PC-9 (cell line): ENCODE measurements at regions of chr9 and their contacts with region 1.

Region 1: GRCh38 chr9:88605512-88606362 is 70.8 kb downstream of the NXNL2 start:
- DNase-seq: no peak
- H3K4me3 ChIP-seq: no peak overlapping the region
- H3K27ac ChIP-seq: no peak overlapping the region
- H3K4me1 ChIP-seq: no peaks in the 10 kb centered on the region
- H3K27me3 ChIP-seq: no peaks in the 10 kb centered on the region
- CTCF ChIP-seq: no peak

Region 2: GRCh38 chr9:88672874-88673689 is 67.3 kb after region 1 on chr9:
- CTCF ChIA-PET with region 1: interaction called, 15 read pairs
- POLR2A ChIA-PET with region 1: no interaction called
- intact Hi-C with region 1: no loop called
- DNase-seq: no peak
- H3K4me3 ChIP-seq: no peak overlapping the region
- H3K27ac ChIP-seq: no peak overlapping the region
- H3K4me1 ChIP-seq: no peaks in the 10 kb centered on the region
- H3K27me3 ChIP-seq: no peaks in the 10 kb centered on the region
- CTCF ChIP-seq: no peak

Region 3: GRCh38 chr9:88684046-88684445 is 78.3 kb after region 1 on chr9:
- CTCF ChIA-PET with region 1: no interaction called
- POLR2A ChIA-PET with region 1: no interaction called
- intact Hi-C with region 1: no loop called
- DNase-seq: no peak
- H3K4me3 ChIP-seq: no peak overlapping the region
- H3K27ac ChIP-seq: no peak overlapping the region
- H3K4me1 ChIP-seq: no peaks in the 10 kb centered on the region
- H3K27me3 ChIP-seq: no peaks in the 10 kb centered on the region
- CTCF ChIP-seq: no peak